RWPE1 (cell line): ENCODE measurements at regions of chr17 and their contacts with region 1.

Region 1: GRCh38 chr17:49939318-49939717 is 29.7 kb upstream of the DLX4 start:
- DNase-seq: no peak
- H3K27ac ChIP-seq: no peak overlapping the region
- CTCF ChIP-seq: no peak

Region 2: GRCh38 chr17:49201481-49201927 is 737.8 kb before region 1 on chr17:
- CTCF ChIA-PET with region 1: no interaction called
- POLR2A ChIA-PET with region 1: no interaction called
- DNase-seq: no peak
- H3K27ac ChIP-seq: no peak overlapping the region
- CTCF ChIP-seq: no peak

Region 3: GRCh38 chr17:49880291-49881053 is 58.8 kb before region 1 on chr17:
- CTCF ChIA-PET with region 1: interaction called, 10 read pairs
- POLR2A ChIA-PET with region 1: no interaction called
- DNase-seq: peak; percentile 91
- H3K27ac ChIP-seq: no peak overlapping the region
- CTCF ChIP-seq: peak; percentile 99

Region 4: GRCh38 chr17:49987681-49988441 is 48.5 kb after region 1 on chr17:
- CTCF ChIA-PET with region 1: no interaction called
- POLR2A ChIA-PET with region 1: no interaction called
- DNase-seq: peak; percentile 32
- H3K27ac ChIP-seq: peak overlapping the region; percentile 90
- CTCF ChIP-seq: no peak